Activated CD4-positive, alpha-beta T cell treated with anti-CD3 and anti-CD28 coated beads for 36 hours (primary cell): ENCODE measurements at regions of chr15 and their contacts with region 1.

Region 1: DNA sequence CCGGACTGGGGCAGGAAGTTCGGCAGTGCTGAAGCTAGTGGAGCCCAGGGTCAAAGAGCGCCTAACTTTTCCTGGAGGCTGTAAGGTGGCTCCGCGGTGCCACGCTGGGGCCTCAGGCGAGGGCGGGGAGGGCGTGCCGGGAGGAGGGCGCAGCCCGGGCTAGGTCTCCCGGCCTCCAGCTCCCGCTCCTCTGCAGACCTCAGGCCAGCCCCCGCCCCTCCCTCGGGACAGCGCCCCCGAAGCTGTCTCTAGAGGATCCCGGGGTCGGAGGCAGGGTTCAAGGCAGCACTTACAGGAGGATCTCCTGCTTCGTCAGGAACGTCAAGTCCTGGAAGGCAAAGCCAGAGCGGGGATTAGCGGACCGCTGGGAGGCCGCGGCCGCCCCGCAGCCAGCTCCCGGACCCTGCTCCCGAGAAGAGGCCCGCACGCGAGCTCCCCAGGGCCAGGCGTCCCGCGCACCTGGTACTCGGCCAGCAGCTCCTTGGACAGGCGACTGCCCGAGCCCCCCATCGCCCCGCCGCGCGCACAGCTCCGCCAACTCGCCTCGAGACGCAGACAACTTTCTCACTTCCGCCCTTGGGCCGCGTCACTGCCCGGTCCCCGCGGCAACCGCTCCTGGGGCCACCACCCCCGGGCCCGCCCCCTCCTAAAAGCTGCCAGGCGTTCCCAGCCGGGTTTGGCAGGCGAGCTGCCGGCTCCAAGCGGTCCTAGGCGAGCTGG is at the start of gene CIB1:
- DNase-seq: peak; percentile 99
- ATAC-seq: peak; percentile 82
- H3K4me3 Mint-ChIP-seq: peak within 1 kb of the TSS; percentile 99
- H3K27ac Mint-ChIP-seq: peak within 1 kb of the TSS; percentile 97
- H3K4me1 Mint-ChIP-seq: peaks cover 46% of the 10 kb centered on the region
- H3K27me3 Mint-ChIP-seq: no peaks in the 10 kb centered on the region
- total RNA-seq, gene CIB1: 135 to 140 TPM

Region 2: DNA sequence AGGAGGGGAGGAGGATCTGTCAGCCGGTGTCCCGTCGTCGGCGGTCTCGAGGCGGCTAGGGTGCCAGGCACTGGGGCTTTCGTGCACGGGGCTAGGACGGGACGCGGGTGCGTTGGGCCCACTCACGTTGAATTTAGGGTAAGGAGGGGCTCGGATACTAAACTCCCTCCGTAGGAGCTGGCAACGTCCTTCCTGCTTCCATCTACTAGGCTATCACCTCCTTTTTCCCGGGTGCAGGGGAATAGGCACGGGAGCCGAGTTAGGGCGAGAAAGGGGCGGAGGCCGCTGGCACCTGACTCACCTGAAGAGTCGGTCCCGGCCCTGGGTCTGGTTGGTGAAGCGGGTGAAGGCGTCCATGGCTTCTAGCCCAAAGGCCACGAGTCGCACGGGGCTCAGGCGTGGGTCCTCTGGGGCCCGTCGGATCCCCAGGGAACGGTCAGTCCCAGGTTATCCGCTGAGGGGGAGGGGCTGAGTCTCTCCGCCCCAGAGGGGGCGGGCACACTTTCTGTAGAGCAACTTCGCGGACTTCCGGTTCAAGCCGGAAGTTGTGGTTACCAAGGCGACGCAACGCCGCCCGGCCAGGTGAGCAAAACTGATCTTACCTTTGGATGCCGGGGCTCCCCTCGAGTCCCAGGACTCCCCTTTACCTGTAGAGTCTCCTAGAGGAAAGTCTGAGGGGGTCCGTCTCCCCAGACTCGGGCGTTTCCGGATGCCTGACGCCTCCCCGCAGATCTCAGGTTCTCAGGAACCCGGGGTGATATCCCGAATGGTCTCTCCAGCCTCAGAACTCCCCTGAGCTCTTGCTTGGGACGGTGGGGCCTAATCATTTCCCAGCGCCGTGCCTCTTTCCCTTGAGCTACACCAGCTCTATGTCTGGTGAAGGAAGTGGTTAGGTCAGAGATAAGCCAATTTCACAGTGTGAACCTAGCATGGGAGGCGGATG is 543.0 kb before region 1 on chr15 and contains the starts of genes PEX11A and WDR93:
- CTCF ChIA-PET with region 1: no interaction called
- POLR2A ChIA-PET with region 1: no interaction called
- intact Hi-C with region 1: loop called in 1 of 2 experiments (anchors 5 kb)
- DNase-seq: peak; percentile 87
- ATAC-seq: peak; percentile 92
- H3K4me3 Mint-ChIP-seq: peak within 1 kb of the TSS; percentile 85
- H3K27ac Mint-ChIP-seq: peak within 1 kb of the TSS; percentile 82
- H3K4me1 Mint-ChIP-seq: peaks cover 12% of the 10 kb centered on the region
- H3K27me3 Mint-ChIP-seq: no peaks in the 10 kb centered on the region
- total RNA-seq, gene PEX11A: 4.7 to 5.3 TPM
- total RNA-seq, gene WDR93: not detected

Region 3: DNA sequence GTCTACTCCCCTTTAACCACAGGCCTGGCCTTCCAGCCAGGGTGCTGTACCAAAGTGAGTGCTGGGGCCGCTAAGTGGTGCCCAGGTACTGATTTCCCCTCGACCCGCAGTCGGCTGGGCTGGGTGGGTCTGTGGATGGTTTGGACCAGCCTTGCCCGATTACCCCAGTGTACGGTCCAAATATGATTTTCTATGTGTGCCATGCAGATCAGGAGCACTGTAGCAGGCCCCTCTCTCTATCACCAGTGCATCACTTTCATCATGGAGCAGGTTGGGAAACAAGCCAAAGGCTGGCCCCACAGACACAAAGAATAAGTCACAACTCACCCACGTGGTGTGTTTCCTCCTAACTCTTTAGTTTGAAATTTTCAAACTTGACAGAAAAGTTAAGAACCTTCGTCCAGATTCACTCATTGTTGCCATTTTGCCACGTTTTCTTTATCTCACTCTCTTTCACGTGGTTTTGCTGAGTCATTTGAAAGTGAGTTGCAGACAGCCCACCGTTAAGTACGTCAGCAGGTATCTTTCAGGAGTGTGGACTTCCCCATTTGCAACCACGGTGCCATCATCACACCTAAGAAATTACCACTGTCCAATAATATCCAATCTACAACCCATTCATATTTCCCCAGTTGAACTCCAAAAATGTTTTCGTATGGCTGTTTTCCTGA is 195.4 kb before region 1 on chr15:
- CTCF ChIA-PET with region 1: interaction called, 3 read pairs
- POLR2A ChIA-PET with region 1: no interaction called
- intact Hi-C with region 1: loop called in 1 of 2 experiments (anchors 1 kb)
- DNase-seq: peak; percentile 82
- ATAC-seq: peak; percentile 82
- H3K4me3 Mint-ChIP-seq: peak overlapping the region; percentile 6
- H3K27ac Mint-ChIP-seq: peak overlapping the region; percentile 95
- H3K4me1 Mint-ChIP-seq: peaks cover 79% of the 10 kb centered on the region
- H3K27me3 Mint-ChIP-seq: no peaks in the 10 kb centered on the region

Region 4: GRCh38 chr15:90165659-90166421 is 67.7 kb before region 1 on chr15:
- CTCF ChIA-PET with region 1: interaction called, 3 read pairs
- POLR2A ChIA-PET with region 1: interaction called, 4 read pairs
- intact Hi-C with region 1: loop called in 1 of 2 experiments (anchors 1 kb)
- DNase-seq: peak; percentile 81
- ATAC-seq: peak; percentile 97
- H3K4me3 Mint-ChIP-seq: no peak overlapping the region
- H3K27ac Mint-ChIP-seq: peak overlapping the region; percentile 74
- H3K4me1 Mint-ChIP-seq: peaks cover 18% of the 10 kb centered on the region
- H3K27me3 Mint-ChIP-seq: peaks cover 6% of the 10 kb centered on the region

Region 5: GRCh38 chr15:90221246-90221900 is 12.2 kb before region 1 on chr15:
- CTCF ChIA-PET with region 1: interaction called, 11 read pairs
- POLR2A ChIA-PET with region 1: interaction called, 3 read pairs
- intact Hi-C with region 1: no loop called
- DNase-seq: peak; percentile 63
- ATAC-seq: peak; percentile 60
- H3K4me3 Mint-ChIP-seq: no peak overlapping the region
- H3K27ac Mint-ChIP-seq: no peak overlapping the region
- H3K4me1 Mint-ChIP-seq: no peaks in the 10 kb centered on the region
- H3K27me3 Mint-ChIP-seq: no peaks in the 10 kb centered on the region

Region 6: GRCh38 chr15:90387537-90388461 is 154.3 kb after region 1 on chr15 and contains the start of gene IQGAP1:
- CTCF ChIA-PET with region 1: no interaction called
- POLR2A ChIA-PET with region 1: interaction called, 3 read pairs
- intact Hi-C with region 1: loop called in 1 of 2 experiments (anchors 1 kb)
- DNase-seq: peak; percentile 99
- ATAC-seq: peak; percentile 95
- H3K4me3 Mint-ChIP-seq: peak within 1 kb of the TSS; percentile 87
- H3K27ac Mint-ChIP-seq: peak within 1 kb of the TSS; percentile 90
- H3K4me1 Mint-ChIP-seq: peaks cover 44% of the 10 kb centered on the region
- H3K27me3 Mint-ChIP-seq: no peaks in the 10 kb centered on the region
- total RNA-seq, gene IQGAP1: 181 to 334 TPM